ENCODE measurements at regions of chr1 and their contacts with region 1.

Region 1: DNA sequence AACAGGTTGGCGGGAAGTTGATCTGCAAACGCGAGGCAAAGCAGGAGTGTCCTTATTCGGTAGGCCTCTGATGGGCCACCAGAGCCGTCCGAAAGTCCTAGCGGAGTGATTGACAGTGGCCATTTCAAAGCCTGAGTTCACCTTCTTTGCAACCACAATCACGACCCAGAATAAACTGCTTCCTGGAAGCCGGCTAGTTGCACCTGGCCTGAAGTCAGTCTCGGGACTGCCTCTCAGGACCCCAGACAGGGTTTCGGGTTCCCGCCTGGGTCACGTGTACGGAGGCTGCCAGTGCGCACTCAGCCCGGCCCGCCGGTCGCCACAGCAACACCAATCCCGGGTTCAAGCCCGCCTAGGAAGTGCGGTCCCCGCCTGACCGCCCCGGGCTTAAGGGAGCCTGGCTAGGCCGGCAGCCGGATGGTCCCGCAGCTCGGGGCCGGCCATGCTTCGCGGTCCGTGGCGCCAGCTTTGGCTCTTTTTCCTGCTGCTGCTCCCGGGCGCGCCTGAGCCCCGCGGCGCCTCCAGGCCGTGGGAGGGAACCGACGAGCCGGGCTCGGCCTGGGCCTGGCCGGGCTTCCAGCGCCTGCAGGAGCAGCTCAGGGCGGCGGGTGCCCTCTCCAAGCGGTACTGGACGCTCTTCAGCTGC is at the start of gene TOR3A:
- DNase-seq: peak; percentile 89
- H3K4me3 ChIP-seq: peak within 1 kb of the TSS; percentile 56 to 91 (median 84)
- H3K27ac ChIP-seq: peak within 1 kb of the TSS; percentile 50
- H3K4me1 ChIP-seq: peaks cover 5% of the 10 kb centered on the region
- H3K27me3 ChIP-seq: no peaks in the 10 kb centered on the region
- CTCF ChIP-seq: no peak
- total RNA-seq, gene TOR3A: 33.5 to 38.0 TPM

Region 2: DNA sequence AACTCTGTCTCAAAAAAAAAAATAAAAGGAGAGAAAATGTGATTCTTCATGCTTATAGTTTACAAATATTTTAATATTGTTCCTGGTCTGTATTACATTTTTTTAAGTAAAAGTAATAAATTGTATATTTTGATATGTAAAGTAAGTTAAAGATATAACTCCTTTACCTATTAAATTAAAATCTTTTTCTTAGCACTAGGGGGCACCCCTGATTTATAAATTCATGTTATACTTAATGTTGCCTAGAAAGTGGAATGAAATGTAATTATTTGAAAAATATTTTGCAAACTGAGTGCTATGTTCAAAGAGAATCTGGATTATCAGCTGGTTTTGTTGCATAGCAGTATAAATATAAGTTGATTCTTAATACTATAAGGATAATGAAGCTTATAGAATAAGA is 307.5 kb before region 1 on chr1:
- CTCF ChIA-PET with region 1: no interaction called
- dilution Hi-C with region 1: no loop called
- in situ Hi-C with region 1: no loop called
- intact Hi-C with region 1: loop called (anchors 5 kb)
- DNase-seq: no peak
- H3K4me3 ChIP-seq: no peak overlapping the region
- H3K27ac ChIP-seq: no peak overlapping the region
- H3K4me1 ChIP-seq: no peaks in the 10 kb centered on the region
- H3K27me3 ChIP-seq: no peaks in the 10 kb centered on the region
- CTCF ChIP-seq: peak; percentile 34 to 39

Region 3: DNA sequence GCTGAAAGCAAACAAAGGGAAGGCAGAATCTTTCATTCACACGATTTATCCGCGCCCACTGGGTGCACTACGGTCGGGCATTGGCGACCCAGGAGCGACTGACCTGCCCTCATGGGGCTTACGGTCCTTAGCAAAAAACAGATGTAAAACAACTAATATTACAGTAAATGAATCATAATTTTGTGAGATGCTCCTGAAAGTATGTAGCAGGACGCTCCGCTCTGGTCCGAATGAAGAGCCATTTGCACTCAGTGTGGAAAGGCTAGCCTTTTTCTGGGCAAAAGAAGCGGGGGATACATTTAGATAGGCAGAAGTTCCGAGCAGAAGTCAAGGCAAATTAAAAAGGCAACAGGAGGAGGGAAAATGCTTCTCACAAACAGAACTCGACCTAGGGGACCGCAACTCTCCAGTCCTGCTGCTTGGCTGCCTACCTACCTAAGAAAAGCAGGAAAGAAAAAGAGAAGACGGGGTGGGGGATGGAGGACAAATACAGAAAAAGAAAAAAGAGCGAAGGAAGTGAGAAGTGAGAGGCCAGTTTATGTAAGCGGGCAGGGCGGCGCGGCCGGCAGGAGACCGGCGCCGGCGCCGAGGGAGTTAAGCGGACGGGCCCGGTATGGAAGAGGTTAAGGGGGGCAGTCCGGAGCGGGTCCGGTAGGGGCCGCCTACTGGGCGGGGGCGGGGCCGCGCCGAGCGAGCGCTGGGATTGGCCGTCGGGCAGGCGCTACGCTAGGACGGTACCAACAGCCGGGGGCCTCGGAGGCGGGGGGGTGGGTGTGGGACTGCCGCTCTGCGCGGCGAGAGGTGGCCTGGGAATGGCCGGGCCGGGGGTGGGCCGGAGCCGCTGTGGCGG is 56.5 kb before region 1 on chr1 and contains the start of gene FAM20B:
- CTCF ChIA-PET with region 1: no interaction called
- dilution Hi-C with region 1: no loop called
- in situ Hi-C with region 1: no loop called
- intact Hi-C with region 1: loop called (anchors 5 kb)
- DNase-seq: peak; percentile 89
- H3K4me3 ChIP-seq: peak within 1 kb of the TSS; percentile 67 to 94 (median 71)
- H3K27ac ChIP-seq: peak within 1 kb of the TSS; percentile 77
- H3K4me1 ChIP-seq: no peaks in the 10 kb centered on the region
- H3K27me3 ChIP-seq: no peaks in the 10 kb centered on the region
- CTCF ChIP-seq: no peak
- total RNA-seq, gene FAM20B: 36.8 to 44.3 TPM

Region 4: DNA sequence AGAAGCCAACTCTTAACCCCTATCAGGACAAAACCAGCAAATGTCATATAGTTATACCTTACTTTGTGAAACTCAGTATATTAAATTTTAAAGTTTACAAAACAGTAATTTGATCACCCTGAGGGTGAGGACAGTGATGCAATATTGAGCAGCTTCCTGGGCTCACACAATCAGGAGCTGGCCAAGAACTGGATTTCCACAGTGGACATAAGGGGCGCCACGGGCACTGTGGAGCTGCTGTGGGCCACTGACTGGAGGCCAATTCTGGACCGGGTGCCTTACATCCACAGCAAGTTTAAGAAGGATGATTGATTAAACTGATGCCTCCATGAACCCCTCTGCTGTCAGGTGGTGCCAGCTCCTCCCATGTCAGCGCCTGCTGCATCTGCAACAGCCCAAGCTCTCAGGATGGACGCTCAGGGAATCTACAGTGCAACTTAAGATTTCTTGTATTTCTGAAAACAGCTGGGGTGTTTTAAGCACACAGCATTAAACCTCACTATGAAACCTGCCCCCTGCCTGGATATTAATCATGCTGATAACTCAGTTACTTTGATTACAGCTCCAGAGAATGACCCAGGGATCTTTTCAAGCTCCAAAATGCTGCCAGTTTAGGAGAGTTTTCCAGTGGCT is 55.9 kb after region 1 on chr1:
- CTCF ChIA-PET with region 1: no interaction called
- dilution Hi-C with region 1: no loop called
- in situ Hi-C with region 1: no loop called
- intact Hi-C with region 1: no loop called
- DNase-seq: no peak
- H3K4me3 ChIP-seq: no peak overlapping the region
- H3K27ac ChIP-seq: no peak overlapping the region
- H3K4me1 ChIP-seq: peaks cover 18% of the 10 kb centered on the region
- H3K27me3 ChIP-seq: no peaks in the 10 kb centered on the region
- CTCF ChIP-seq: no peak

Region 5: GRCh38 chr1:179206812-179207211 is 125.0 kb after region 1 on chr1:
- CTCF ChIA-PET with region 1: no interaction called
- dilution Hi-C with region 1: no loop called
- in situ Hi-C with region 1: no loop called
- intact Hi-C with region 1: no loop called
- DNase-seq: no peak
- H3K4me3 ChIP-seq: no peak overlapping the region
- H3K27ac ChIP-seq: no peak overlapping the region
- H3K4me1 ChIP-seq: no peaks in the 10 kb centered on the region
- H3K27me3 ChIP-seq: no peaks in the 10 kb centered on the region
- CTCF ChIP-seq: no peak

Region 6: DNA sequence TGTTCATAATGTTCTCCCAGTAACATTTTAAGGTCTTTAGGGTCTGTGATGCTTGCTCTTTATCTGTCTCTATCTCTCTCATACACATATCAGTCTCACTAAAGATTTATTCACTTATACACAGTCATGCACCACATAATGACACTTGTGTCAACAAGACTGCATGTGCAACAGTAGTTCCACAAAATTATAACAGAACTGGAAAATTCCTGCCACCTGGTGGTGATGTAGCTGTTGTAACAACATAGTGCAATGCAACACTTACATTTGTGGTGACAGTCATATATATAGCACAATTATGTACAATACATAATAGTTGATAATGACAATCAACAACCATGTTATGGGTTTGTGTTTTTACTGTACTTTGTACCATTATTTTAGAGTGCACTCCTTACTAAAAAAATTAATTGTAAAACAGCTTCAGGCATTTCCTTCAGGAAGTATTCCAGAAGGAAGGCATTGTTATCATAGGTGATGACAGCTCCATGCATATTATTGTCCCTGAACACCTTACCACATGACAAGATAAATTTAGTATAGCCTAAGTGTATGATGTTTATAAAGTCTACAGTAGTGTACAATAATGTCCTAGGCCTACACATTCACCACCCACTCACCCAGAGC is 517.9 kb after region 1 on chr1:
- CTCF ChIA-PET with region 1: no interaction called
- dilution Hi-C with region 1: no loop called
- in situ Hi-C with region 1: no loop called
- intact Hi-C with region 1: loop called (anchors 10 kb)
- DNase-seq: peak; percentile 32
- H3K4me3 ChIP-seq: no peak overlapping the region
- H3K27ac ChIP-seq: no peak overlapping the region
- H3K4me1 ChIP-seq: no peaks in the 10 kb centered on the region
- H3K27me3 ChIP-seq: peaks cover 3% of the 10 kb centered on the region
- CTCF ChIP-seq: peak; percentile 50 to 53

Measured in mammary epithelial cell (primary cell).